Endothelial cell of umbilical vein (primary cell): ENCODE measurements at regions of chr2 and their contacts with region 1.

Region 1: GRCh38 chr2:25991965-25992364 is 9.7 kb upstream of the KIF3C start:
- DNase-seq: no peak
- H3K4me3 ChIP-seq: no peak overlapping the region
- H3K27ac ChIP-seq: no peak overlapping the region
- H3K4me1 ChIP-seq: peaks cover 3% of the 10 kb centered on the region
- H3K27me3 ChIP-seq: no peaks in the 10 kb centered on the region
- CTCF ChIP-seq: no peak
- POLR2A ChIP-seq: no peak

Region 2: DNA sequence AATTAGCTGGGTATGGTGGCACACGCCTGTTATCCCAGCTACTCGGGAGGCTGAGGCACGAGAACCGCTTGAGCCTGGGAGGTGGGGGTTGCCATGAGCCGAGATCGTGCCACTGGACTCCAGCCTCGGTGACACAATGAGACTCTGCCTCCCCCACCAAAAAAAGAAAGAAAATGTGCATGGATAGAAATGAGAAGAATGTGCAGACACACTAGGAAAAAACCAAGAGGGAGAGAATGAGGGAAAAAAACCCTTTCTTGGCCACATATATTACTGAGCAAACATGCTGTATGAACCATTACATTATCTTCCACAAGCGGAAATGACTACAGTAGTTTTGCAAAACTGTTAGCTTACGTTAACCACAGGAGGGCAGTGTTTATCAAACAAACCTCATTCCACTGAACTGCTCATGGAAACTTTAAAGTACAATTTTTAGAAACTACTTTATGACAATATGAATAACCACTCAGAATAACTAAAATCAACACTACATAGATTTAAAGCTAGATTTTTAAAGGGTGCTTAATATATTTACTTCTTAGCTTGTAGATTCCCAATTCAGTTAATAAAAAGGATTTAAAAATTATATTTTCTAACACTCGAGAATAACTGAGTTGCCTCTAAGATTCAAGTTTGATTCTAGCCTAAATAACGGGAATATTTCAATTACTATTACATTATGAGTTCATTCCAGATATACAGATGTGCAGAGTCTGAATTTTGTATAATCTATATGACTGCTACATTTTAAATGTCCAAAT is 140.0 kb before region 1 on chr2:
- CTCF ChIA-PET with region 1: interaction called, 6 read pairs
- POLR2A ChIA-PET with region 1: no interaction called
- dilution Hi-C with region 1: no loop called
- intact Hi-C with region 1: loop called (anchors 2 kb)
- DNase-seq: peak; percentile 81
- H3K4me3 ChIP-seq: no peak overlapping the region
- H3K27ac ChIP-seq: peak overlapping the region; percentile 50
- H3K4me1 ChIP-seq: peaks cover 5% of the 10 kb centered on the region
- H3K27me3 ChIP-seq: no peaks in the 10 kb centered on the region
- CTCF ChIP-seq: peak; percentile 45 to 48
- POLR2A ChIP-seq: no peak

Region 3: DNA sequence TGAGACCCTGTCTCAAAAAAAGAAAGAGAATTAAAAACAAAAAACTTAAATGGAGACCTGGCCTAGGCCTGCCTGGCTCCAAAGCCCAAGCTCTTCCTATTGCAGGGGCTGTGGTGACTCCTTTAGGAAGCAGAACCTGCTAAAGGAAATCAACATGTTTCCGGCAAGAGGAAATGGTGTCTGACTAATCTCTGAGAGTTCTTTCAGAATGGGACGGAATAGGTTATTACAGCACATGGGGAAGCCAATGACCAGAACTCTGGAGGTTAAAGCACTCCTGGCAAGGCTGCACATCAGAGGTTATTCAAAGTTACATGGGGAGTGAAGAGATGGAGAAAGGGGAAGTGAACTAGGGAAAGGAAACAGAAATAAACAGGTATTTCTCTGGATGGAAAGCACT is 31.0 kb before region 1 on chr2:
- CTCF ChIA-PET with region 1: interaction called, 17 read pairs
- POLR2A ChIA-PET with region 1: no interaction called
- dilution Hi-C with region 1: no loop called
- intact Hi-C with region 1: no loop called
- DNase-seq: peak; percentile 95
- H3K4me3 ChIP-seq: no peak overlapping the region
- H3K27ac ChIP-seq: peak overlapping the region; percentile 58
- H3K4me1 ChIP-seq: peaks cover 28% of the 10 kb centered on the region
- H3K27me3 ChIP-seq: no peaks in the 10 kb centered on the region
- CTCF ChIP-seq: no peak
- POLR2A ChIP-seq: no peak

Region 4: GRCh38 chr2:26018176-26018716 is 26.3 kb after region 1 on chr2:
- CTCF ChIA-PET with region 1: interaction called, 14 read pairs
- POLR2A ChIA-PET with region 1: no interaction called
- dilution Hi-C with region 1: no loop called
- intact Hi-C with region 1: no loop called
- DNase-seq: peak; percentile 52
- H3K4me3 ChIP-seq: no peak overlapping the region
- H3K27ac ChIP-seq: no peak overlapping the region
- H3K4me1 ChIP-seq: peaks cover 7% of the 10 kb centered on the region
- H3K27me3 ChIP-seq: no peaks in the 10 kb centered on the region
- CTCF ChIP-seq: no peak
- POLR2A ChIP-seq: no peak

Region 5: DNA sequence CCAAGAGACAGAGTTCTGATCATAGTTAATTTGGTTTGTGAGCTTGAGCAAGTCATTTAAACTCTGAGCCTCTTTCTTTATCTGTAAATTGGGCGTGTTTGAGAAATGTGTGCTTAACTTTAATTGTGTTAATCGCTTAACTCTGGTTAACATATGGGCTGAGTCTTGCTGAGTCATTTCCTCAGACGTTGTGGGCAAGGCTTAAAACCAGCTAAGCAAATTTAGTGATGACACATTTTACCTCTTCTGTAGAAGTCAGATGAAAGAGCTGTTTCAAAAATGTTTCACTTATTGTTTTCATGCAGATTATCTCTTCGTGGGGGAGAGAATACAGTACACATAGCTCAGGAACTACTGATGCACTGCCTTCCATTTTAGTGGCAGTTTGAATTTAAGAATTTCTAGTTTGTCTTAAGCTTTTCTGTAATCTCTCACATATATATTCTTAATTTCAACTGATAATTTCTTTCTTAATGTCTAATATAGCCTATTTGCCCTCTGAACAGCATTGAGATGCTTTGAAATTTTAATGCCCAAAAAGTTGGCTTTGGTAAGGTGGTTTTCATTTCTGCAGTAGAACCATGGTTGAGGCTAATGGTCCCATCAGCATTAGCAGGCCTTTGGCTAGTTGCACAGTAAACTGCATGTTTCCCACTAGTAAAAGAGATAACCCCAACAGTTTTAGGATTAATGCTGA is 76.8 kb after region 1 on chr2:
- CTCF ChIA-PET with region 1: interaction called, 19 read pairs
- POLR2A ChIA-PET with region 1: no interaction called
- dilution Hi-C with region 1: no loop called
- intact Hi-C with region 1: loop called (anchors 2 kb)
- DNase-seq: peak; percentile 86
- H3K4me3 ChIP-seq: no peak overlapping the region
- H3K27ac ChIP-seq: peak overlapping the region; percentile 57
- H3K4me1 ChIP-seq: peaks cover 20% of the 10 kb centered on the region
- H3K27me3 ChIP-seq: no peaks in the 10 kb centered on the region
- CTCF ChIP-seq: no peak
- POLR2A ChIP-seq: no peak

Region 6: GRCh38 chr2:26139269-26140183 is 147.6 kb after region 1 on chr2:
- CTCF ChIA-PET with region 1: interaction called, 35 read pairs
- POLR2A ChIA-PET with region 1: no interaction called
- dilution Hi-C with region 1: no loop called
- intact Hi-C with region 1: no loop called
- DNase-seq: no peak
- H3K4me3 ChIP-seq: no peak overlapping the region
- H3K27ac ChIP-seq: no peak overlapping the region
- H3K4me1 ChIP-seq: no peaks in the 10 kb centered on the region
- H3K27me3 ChIP-seq: no peaks in the 10 kb centered on the region
- CTCF ChIP-seq: no peak
- POLR2A ChIP-seq: no peak

Region 7: GRCh38 chr2:26184555-26185303 is 192.8 kb after region 1 on chr2:
- CTCF ChIA-PET with region 1: interaction called, 26 read pairs
- POLR2A ChIA-PET with region 1: no interaction called
- dilution Hi-C with region 1: no loop called
- intact Hi-C with region 1: no loop called
- DNase-seq: peak; percentile 86
- H3K4me3 ChIP-seq: peak overlapping the region; percentile 50 to 52 (median 51)
- H3K27ac ChIP-seq: no peak overlapping the region
- H3K4me1 ChIP-seq: peaks cover 3% of the 10 kb centered on the region
- H3K27me3 ChIP-seq: no peaks in the 10 kb centered on the region
- CTCF ChIP-seq: peak; percentile 70 to 84
- POLR2A ChIP-seq: peak; percentile 53